Breast epithelium (tissue), 4 donors: ENCODE measurements at regions of chr3 and their contacts with region 1.

Region 1: DNA sequence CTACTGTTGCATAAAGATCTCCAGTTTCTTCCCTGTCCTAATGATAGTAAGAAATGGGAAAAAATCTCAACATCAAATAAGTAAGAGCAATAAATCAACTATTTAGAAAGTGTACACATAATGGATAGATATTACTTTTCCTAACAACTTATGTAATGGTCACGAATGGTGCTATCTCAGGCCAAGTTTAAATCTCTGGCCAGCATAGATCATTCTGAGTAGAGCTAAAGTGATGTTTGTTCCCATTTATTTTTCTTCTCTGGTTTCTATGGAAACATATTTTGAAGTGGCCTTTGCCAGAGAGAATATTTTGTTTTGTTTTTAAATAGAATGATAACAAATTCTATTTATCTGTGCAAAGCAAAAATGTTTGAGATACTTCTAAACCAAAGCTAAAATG is 249.7 kb upstream of the TTC14 start:
- DNase-seq: no peak
- H3K4me3 ChIP-seq: no peak overlapping the region
- H3K27ac ChIP-seq: no peak overlapping the region
- H3K4me1 ChIP-seq: no peaks in the 10 kb centered on the region
- H3K27me3 ChIP-seq: no peaks in the 10 kb centered on the region
- CTCF ChIP-seq: no peak
- POLR2A ChIP-seq: no peak

Region 2: GRCh38 chr3:179921500-179921899 is 430.8 kb before region 1 on chr3:
- intact Hi-C with region 1: loop called (anchors 5 kb)
- DNase-seq: no peak
- H3K4me3 ChIP-seq: no peak overlapping the region
- H3K27ac ChIP-seq: no peak overlapping the region
- H3K4me1 ChIP-seq: no peaks in the 10 kb centered on the region
- H3K27me3 ChIP-seq: no peaks in the 10 kb centered on the region
- CTCF ChIP-seq: no peak
- POLR2A ChIP-seq: no peak

Region 3: DNA sequence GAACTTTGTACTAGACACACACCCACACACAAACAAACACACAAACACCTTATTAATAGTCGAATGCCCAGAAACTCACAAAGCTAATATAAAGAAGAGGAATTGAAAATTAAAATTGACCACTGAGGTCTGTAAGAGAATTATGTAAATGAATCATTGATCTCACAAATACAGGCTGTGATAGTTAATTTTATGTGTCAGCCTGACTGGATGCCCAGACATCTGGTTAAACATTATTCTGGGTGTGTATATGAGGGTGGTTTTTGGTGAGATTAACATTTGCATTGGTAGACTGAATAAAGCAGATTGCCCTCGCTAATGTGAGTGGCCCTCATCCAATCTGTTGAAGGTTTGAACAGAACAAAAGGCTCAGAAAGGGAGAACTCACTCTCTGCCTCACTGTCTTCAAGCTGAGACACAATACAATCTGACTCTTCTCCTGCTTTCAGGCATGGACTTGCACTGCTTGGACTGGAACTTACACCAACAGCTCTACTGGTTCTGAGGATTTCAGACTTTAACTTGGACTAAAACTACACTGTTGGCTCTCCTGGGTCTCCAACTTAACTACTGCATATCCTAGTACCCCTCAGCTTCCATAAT is 50.3 kb after region 1 on chr3:
- intact Hi-C with region 1: no loop called
- DNase-seq: no peak
- H3K4me3 ChIP-seq: no peak overlapping the region
- H3K27ac ChIP-seq: no peak overlapping the region
- H3K4me1 ChIP-seq: no peaks in the 10 kb centered on the region
- H3K27me3 ChIP-seq: no peaks in the 10 kb centered on the region
- CTCF ChIP-seq: no peak
- POLR2A ChIP-seq: no peak

Region 4: GRCh38 chr3:180612364-180612763 is 260.1 kb after region 1 on chr3:
- intact Hi-C with region 1: no loop called
- DNase-seq: no peak
- H3K4me3 ChIP-seq: no peak overlapping the region
- H3K27ac ChIP-seq: no peak overlapping the region
- H3K4me1 ChIP-seq: no peaks in the 10 kb centered on the region
- H3K27me3 ChIP-seq: no peaks in the 10 kb centered on the region
- CTCF ChIP-seq: no peak
- POLR2A ChIP-seq: no peak